ENCODE measurements at regions of chr15 and their contacts with region 1.

Region 1: DNA sequence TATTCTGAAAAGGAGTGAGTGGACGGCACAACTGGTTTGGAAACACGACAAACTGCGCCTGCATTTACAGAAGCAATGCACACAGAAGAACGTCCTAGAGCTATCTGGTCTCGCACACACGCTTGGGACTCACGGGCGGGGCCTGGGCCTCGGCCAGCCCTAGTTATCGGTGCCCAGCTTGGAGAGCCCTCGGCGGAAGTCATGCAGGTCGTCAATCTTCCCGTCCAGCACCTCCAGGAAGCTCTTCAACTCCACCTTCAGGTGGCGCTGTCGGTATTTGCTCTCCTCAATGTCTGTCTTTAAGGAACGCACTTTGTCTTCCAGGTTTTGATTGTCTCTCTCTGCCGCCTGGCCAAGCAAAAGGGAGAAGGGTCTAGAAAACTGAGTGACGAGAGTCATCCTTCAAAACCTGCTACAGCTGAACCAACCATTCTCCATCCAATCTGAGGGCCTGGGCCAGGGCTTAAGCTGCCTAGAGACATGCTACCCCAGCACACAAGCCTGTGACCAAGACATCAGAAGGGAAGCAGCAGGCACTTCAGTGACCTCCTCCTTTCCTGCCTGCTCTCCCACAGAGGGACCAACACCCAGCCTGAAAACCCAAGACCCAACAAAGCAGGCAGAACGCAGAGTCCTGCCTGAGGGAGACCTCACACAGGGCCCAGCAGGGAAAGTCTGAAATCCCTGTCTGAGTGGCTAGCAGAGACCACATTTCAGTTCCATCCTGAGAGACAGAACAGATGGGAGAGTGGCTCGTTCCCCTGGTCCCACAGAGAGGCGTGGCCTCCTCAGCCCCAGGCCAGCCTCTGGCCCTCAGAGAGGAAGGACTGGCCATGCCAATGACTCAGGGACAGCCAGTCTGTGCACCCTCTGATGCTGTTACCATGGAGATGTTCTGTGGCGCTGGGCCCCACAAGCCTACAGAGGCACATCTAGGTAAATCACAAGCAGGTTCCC is 40.4 kb downstream of the WHAMM start:
- H3K4me3 ChIP-seq: no peak overlapping the region
- H3K27ac ChIP-seq: no peak overlapping the region
- H3K4me1 ChIP-seq: 0 out of 2 replicates have a peak, but pooled peaks cover 3% of the 10 kb centered on the region
- CTCF ChIP-seq: peak; percentile 69

Region 2: GRCh38 chr15:82832601-82833361 is 17.1 kb before region 1 on chr15:
- CTCF ChIA-PET with region 1: interaction called, 20 read pairs
- POLR2A ChIA-PET with region 1: no interaction called
- H3K4me3 ChIP-seq: no peak overlapping the region
- H3K27ac ChIP-seq: no peak overlapping the region
- H3K4me1 ChIP-seq: no peaks in the 10 kb centered on the region
- CTCF ChIP-seq: no peak

Region 3: DNA sequence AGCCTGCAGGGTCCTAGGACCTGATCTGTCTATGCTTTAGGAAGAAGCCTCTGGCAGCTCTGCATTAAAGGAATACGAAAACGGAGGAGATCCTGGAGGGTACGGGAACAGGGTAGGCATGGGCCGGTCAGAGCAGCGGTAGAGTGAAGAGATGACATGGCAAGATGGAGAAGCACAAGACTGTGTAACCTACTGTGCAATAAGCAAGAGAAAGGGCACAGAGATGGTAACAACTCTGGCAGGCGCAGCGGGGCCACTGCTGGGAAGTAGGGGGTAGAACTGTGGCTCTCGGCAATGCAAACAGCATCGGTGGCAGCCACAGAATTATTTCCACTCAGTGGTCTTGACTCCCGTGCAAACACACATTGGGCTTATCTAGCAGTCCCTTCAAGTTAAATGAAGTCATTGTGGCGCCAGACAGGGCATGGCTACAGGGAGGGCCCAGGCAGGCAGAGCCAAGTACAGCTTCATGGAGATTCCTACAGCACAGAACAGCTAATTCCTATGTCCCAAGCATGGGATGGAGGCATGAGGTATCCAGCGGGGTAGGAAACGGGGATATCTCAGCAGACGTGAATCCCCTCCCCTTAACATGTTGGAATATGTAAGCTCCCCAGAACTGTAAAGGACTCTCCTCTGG is 11.6 kb before region 1 on chr15:
- CTCF ChIA-PET with region 1: interaction called, 20 read pairs
- POLR2A ChIA-PET with region 1: no interaction called
- H3K4me3 ChIP-seq: no peak overlapping the region
- H3K27ac ChIP-seq: no peak overlapping the region
- H3K4me1 ChIP-seq: no peaks in the 10 kb centered on the region
- CTCF ChIP-seq: no peak

Region 4: GRCh38 chr15:82871358-82871757 is 21.5 kb after region 1 on chr15:
- CTCF ChIA-PET with region 1: interaction called, 10 read pairs
- POLR2A ChIA-PET with region 1: no interaction called
- H3K4me3 ChIP-seq: no peak overlapping the region
- H3K27ac ChIP-seq: no peak overlapping the region
- H3K4me1 ChIP-seq: no peaks in the 10 kb centered on the region
- CTCF ChIP-seq: no peak

Region 5: DNA sequence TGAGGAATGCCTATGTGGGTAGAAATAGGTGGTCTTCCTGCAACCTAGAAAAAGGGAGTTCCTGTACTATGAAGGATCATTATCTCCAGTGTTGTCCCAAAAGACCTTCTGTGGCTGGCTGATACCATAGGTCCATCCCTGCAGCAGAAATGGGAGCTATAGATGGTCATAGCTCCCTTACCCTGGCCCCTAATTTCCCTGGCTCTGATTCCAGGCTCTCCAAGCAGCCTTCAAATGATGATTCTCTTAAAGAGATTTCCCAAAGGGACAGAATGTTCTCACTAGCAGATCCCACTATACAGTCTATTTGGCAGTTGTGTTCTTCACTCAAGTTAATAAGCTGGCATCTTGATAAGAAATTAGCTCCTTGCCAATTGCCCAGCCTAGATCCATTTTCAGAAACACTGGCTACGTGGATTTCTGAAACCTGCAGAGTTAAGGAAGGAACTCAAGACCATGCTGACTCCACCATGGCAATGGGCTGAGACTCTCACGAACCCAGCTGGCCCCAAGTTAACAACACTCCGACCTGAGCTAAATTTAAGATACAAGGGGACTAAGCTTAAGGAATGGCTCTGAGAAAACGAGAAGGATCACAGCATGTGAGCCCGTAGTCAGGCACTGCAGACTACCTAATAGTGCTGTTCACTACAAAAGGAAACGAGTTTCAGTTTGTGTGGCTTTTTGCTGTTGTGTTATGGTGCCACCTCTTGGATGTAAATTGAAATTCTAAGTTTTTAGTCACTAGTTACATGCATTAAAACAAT is 150.3 kb after region 1 on chr15:
- CTCF ChIA-PET with region 1: interaction called, 54 read pairs
- POLR2A ChIA-PET with region 1: interaction called, 5 read pairs
- H3K4me3 ChIP-seq: no peak overlapping the region
- H3K27ac ChIP-seq: no peak overlapping the region
- H3K4me1 ChIP-seq: no peaks in the 10 kb centered on the region
- CTCF ChIP-seq: peak; percentile 68; the same call in 1 of the 2 replicates